ENCODE measurements at regions of chr4 and their contacts with region 1.

Region 1: GRCh38 chr4:184474263-184475095 is at the start of gene IRF2:
- DNase-seq: peak; percentile 97 to 98
- ATAC-seq: peak; percentile 86 to 90 (median 88)
- H3K4me3 ChIP-seq: peak within 1 kb of the TSS; percentile 84
- H3K27ac ChIP-seq: peak within 1 kb of the TSS; percentile 97
- H3K4me1 ChIP-seq: peaks cover 52% of the 10 kb centered on the region
- H3K27me3 ChIP-seq: no peaks in the 10 kb centered on the region
- CTCF ChIP-seq: no peak
- total RNA-seq, gene IRF2: 14.6 to 23.4 (median 16.3) TPM

Region 2: GRCh38 chr4:184263910-184264732 is 210.4 kb before region 1 on chr4:
- intact Hi-C with region 1: loop called in 1 of 2 experiments (anchors 5 kb)
- DNase-seq: peak; percentile 93 to 95
- ATAC-seq: peak; percentile 78 to 95 (median 86)
- H3K4me3 ChIP-seq: no peak overlapping the region
- H3K27ac ChIP-seq: no peak overlapping the region
- H3K4me1 ChIP-seq: no peaks in the 10 kb centered on the region
- H3K27me3 ChIP-seq: no peaks in the 10 kb centered on the region
- CTCF ChIP-seq: peak; percentile 95

Region 3: GRCh38 chr4:184298254-184298653 is 176.2 kb before region 1 on chr4:
- intact Hi-C with region 1: no loop called
- DNase-seq: no peak
- ATAC-seq: no peak
- H3K4me3 ChIP-seq: no peak overlapping the region
- H3K27ac ChIP-seq: no peak overlapping the region
- H3K4me1 ChIP-seq: no peaks in the 10 kb centered on the region
- H3K27me3 ChIP-seq: no peaks in the 10 kb centered on the region
- CTCF ChIP-seq: no peak

Region 4: DNA sequence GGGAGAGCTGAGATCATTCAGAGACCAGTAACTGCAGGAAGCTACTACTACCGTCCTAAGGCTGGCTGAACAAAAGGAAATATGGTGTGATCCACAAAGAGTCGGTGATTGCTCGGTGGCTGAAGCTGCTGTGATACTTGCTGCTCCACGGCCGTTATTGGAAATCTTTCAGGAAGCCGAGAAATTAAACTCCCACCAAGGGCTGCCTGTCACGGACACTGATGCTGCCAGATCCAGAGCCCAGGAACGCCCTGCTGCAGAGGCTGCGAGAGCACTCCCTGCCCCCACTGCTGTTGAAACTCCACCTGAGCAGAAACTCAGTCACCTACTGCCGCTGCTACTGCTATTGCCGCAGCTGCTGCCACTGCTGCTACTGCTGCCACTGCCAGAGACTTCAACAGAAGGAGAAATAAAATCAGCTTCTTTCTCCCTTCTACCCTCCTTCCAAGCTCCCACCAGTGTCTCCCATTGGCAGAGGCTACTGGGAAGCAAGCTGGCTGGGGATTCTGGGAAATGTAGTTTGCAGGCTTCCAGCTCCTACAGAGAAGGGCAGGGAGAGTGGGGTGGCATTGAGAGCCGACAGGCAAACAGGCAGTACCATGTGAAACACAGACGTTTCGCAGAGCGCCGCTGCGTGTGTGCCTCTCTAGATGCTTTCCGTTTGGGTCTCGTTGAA is 130.8 kb before region 1 on chr4:
- intact Hi-C with region 1: loop called (anchors 2 to 5 kb)
- DNase-seq: peak; percentile 62 to 77
- ATAC-seq: peak; percentile 64 to 78 (median 68)
- H3K4me3 ChIP-seq: peak overlapping the region; percentile 68
- H3K27ac ChIP-seq: peak overlapping the region; percentile 94
- H3K4me1 ChIP-seq: peaks cover 46% of the 10 kb centered on the region
- H3K27me3 ChIP-seq: no peaks in the 10 kb centered on the region
- CTCF ChIP-seq: no peak

Region 5: DNA sequence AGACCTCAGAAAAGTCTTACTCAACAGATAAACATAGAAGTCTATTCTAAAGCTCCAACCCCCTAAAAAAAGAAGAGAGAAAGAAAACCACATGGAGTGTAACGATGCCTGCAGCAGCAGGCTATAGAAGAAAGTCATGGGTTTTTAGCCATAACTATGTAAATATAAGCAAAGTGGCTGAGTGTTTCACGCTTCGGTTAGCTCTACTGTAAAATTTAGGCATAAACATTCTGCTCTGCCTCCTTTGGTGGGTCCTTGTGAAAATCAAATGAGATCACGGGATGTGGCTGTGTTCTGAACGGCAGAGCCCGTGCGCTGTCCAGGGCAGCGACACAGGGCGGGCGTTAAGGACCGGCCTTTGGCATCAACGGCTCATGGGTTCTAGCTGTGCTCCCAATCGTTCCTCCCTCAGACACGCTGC is 78.5 kb before region 1 on chr4:
- intact Hi-C with region 1: loop called in 1 of 2 experiments (anchors 5 kb)
- DNase-seq: peak in 1 of 2 donors; percentile 58
- ATAC-seq: peak in 1 of 4 donors; percentile 18
- H3K4me3 ChIP-seq: no peak overlapping the region
- H3K27ac ChIP-seq: peak overlapping the region; percentile 84
- H3K4me1 ChIP-seq: peaks cover 53% of the 10 kb centered on the region
- H3K27me3 ChIP-seq: no peaks in the 10 kb centered on the region
- CTCF ChIP-seq: no peak

Region 6: GRCh38 chr4:184649026-184649970 is 174.8 kb after region 1 on chr4 and contains the starts of genes CASP3 and PRIMPOL:
- intact Hi-C with region 1: loop called in 1 of 2 experiments (anchors 10 kb)
- DNase-seq: peak; percentile 98 to 99
- ATAC-seq: peak; percentile 92 to 95 (median 94)
- H3K4me3 ChIP-seq: peak within 1 kb of the TSS; percentile 91
- H3K27ac ChIP-seq: peak within 1 kb of the TSS; percentile 99
- H3K4me1 ChIP-seq: peaks cover 53% of the 10 kb centered on the region
- H3K27me3 ChIP-seq: no peaks in the 10 kb centered on the region
- CTCF ChIP-seq: peak; percentile 29
- total RNA-seq, gene CASP3: 13.8 to 49.7 (median 20.5) TPM
- total RNA-seq, gene PRIMPOL: 4.8 to 10.1 (median 7.5) TPM